PC-9 (cell line): ENCODE measurements at regions of chr14 and their contacts with region 1.

Region 1: DNA sequence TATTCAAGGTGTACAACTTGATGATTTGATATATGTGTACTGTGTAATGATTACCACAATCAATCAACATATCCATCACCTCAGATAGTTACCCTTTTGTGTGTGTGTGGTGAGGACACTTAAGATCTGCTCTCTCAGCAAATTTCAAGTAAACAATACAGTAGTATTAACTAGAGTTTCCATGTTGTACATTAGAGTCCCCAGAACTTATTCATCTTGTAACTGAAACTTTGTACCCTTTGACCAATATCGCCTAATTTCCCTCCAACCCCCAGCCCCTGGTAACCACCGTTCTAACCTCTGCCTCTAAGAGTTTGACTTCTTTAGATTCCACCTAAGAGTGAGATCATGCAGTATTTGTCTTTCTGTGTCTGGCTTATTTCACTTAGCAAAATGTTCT is 12.1 kb downstream of the ADCK1 start:
- DNase-seq: no peak
- H3K4me3 ChIP-seq: no peak overlapping the region
- H3K27ac ChIP-seq: no peak overlapping the region
- H3K4me1 ChIP-seq: no peaks in the 10 kb centered on the region
- H3K27me3 ChIP-seq: no peaks in the 10 kb centered on the region
- CTCF ChIP-seq: no peak

Region 2: DNA sequence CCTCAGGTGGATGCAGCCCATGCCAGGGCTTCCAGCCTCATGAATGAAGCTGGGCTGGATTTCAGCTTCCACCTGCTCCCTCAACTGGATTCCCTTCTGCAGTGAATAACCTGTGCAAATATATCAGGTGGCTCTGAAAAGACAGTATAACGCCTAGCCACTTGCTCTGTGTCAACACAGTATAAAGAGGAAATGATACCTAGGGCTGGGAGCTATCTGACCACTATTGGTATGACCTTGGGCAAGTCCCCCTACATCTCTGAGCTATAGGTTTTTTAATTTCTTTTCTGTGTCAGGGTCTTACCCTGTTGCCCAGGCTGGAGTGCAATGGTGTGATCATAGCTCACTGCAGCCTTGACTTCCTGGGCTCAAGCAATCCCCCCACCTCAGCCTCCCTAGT is 333.2 kb before region 1 on chr14:
- CTCF ChIA-PET with region 1: no interaction called
- POLR2A ChIA-PET with region 1: no interaction called
- intact Hi-C with region 1: no loop called
- DNase-seq: no peak
- H3K4me3 ChIP-seq: no peak overlapping the region
- H3K27ac ChIP-seq: no peak overlapping the region
- H3K4me1 ChIP-seq: no peaks in the 10 kb centered on the region
- H3K27me3 ChIP-seq: peaks cover 33% of the 10 kb centered on the region
- CTCF ChIP-seq: no peak

Region 3: DNA sequence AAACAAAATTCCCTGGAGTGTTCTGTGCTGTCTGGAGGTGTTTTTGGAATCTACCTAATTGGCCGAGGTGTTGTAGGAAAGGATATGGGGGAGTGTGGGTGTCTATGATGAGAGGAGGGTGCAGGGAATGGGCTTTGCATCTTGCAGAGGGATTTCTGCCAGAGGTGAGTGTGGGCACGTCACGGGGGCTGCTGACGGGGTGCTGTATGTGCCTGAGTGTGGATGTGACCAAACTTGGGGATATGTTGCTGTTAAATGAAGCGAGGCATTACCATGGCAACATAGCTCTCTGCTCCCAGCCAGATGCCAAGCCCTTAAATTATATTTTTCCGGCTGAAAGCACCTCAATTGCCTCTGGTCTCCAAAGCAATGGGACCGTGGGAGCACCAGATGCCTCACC is 151.3 kb before region 1 on chr14:
- CTCF ChIA-PET with region 1: interaction called, 6 read pairs
- POLR2A ChIA-PET with region 1: no interaction called
- intact Hi-C with region 1: loop called (anchors 1 kb)
- DNase-seq: no peak
- H3K4me3 ChIP-seq: no peak overlapping the region
- H3K27ac ChIP-seq: no peak overlapping the region
- H3K4me1 ChIP-seq: peaks cover 14% of the 10 kb centered on the region
- H3K27me3 ChIP-seq: no peaks in the 10 kb centered on the region
- CTCF ChIP-seq: no peak